GM23248 (cell line): ENCODE measurements at regions of chr11 and their contacts with region 1.

Region 1: GRCh38 chr11:48116437-48117228 is 100.0 kb upstream of the OR4B1 start:
- DNase-seq: peak; percentile 40
- H3K4me3 ChIP-seq: no peak overlapping the region
- H3K27ac ChIP-seq: no peak overlapping the region
- H3K4me1 ChIP-seq: no peaks in the 10 kb centered on the region
- H3K27me3 ChIP-seq: no peaks in the 10 kb centered on the region

Region 2: GRCh38 chr11:47980245-47981049 is 136.2 kb before region 1 on chr11 and contains the start of gene PTPRJ:
- in situ Hi-C with region 1: loop called (anchors 10 kb)
- DNase-seq: peak; percentile 71
- H3K4me3 ChIP-seq: peak within 1 kb of the TSS; percentile 81
- H3K27ac ChIP-seq: no peak within 1 kb of the TSS
- H3K4me1 ChIP-seq: peaks cover 28% of the 10 kb centered on the region
- H3K27me3 ChIP-seq: no peaks in the 10 kb centered on the region
- total RNA-seq, gene PTPRJ: 9.5 and 10.0 TPM in 2 replicates

Region 3: GRCh38 chr11:48066881-48067800 is 49.5 kb before region 1 on chr11:
- in situ Hi-C with region 1: no loop called
- DNase-seq: peak; percentile 37
- H3K4me3 ChIP-seq: no peak overlapping the region
- H3K27ac ChIP-seq: peak overlapping the region; percentile 22
- H3K4me1 ChIP-seq: peaks cover 40% of the 10 kb centered on the region
- H3K27me3 ChIP-seq: no peaks in the 10 kb centered on the region